Naive thymus-derived CD4-positive, alpha-beta T cell (primary cell): ENCODE measurements at regions of chr12 and their contacts with region 1.

Region 1: DNA sequence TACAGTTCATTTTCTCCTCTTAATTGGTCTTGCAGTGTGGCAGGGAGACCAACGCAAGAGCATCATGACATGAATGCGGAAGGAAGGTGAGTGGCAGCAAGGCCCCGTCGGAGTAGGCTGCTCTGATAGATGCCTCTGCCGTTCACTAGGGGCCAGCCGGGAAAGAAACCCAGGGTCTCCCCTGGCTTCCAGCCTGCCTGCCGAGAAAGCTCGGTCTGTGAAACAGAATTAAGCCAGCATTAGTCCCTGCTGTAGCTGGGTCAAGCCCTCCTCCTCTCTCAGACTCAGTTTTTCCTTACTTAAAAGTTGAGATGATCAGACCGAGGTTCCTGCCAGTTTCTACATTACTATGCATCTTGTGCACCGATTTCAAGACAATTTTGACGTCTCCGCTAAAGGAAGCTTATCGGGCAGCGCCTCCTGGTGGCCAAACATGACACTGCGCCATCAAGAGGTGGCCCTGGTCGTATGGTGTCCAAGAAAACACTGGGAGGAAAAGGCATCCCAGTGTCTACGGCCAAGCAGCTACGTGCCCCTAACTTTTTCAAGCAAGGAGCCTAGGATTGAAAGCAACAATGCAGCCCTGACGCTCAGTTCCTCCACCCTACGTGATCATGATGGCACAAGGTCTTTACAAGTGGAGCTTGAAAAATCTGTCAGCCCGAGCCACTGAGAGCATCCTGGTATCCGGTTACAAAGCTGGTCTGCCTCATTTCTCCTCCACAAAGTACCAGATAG is 131.6 kb downstream of the KSR2 start:
- DNase-seq: peak; percentile 17 to 74 (median 61)
- ATAC-seq: peak; percentile 77
- H3K4me3 ChIP-seq: no peak overlapping the region
- H3K4me3 Mint-ChIP-seq: peak overlapping the region in 8 of 10 donors; percentile 16 to 77 (median 56)
- H3K27ac ChIP-seq: no peak overlapping the region
- H3K27ac Mint-ChIP-seq: no peak overlapping the region
- H3K4me1 ChIP-seq: peaks cover 0 to 4% of the 10 kb centered on the region in 2 donors
- H3K4me1 Mint-ChIP-seq: peaks cover 0 to 8% (median 7%) of the 10 kb centered on the region in 7 donors
- H3K27me3 ChIP-seq: no peaks in the 10 kb centered on the region
- H3K27me3 Mint-ChIP-seq: peaks cover 5 to 35% (median 17%) of the 10 kb centered on the region in 5 donors

Region 2: DNA sequence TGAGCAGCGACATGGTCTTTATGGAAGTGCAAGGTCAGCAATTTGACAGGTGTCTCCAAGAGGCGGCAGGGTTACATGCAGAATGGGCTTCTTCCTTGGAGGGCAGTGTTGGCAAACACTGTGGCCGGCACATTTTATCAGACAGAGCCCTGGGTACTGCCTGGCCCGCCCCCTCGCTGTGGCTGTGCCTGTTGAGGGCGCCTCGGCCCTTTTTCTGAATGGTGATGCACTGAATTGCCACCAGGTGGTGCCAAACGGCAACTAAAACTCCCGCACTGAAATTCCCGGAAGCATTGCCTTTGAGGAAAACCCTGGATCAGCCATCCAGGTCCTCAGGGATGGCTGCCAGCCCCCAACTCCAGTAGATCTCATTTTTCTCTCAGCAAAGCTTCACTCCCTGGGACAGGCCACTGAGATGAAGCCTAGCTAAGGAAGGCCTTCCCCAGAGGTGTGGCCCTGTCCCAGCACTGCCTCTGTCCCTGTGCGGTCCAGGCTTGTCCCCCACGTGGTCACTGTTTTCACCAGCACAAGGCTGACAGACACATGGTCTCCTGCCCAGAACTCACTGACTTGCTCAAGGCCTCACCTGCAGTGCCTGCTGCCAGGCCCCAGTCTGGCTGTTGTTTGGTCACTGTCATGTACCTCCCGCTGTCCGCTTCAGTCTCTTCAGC is 811.6 kb before region 1 on chr12:
- CTCF ChIA-PET with region 1: no interaction called
- POLR2A ChIA-PET with region 1: no interaction called
- intact Hi-C with region 1: loop called in 1 of 2 experiments (anchors 10 kb)
- DNase-seq: peak in 7 of 9 donors; percentile 21 to 54 (median 36)
- ATAC-seq: peak; percentile 84
- H3K4me3 ChIP-seq: no peak overlapping the region
- H3K4me3 Mint-ChIP-seq: no peak overlapping the region
- H3K27ac ChIP-seq: no peak overlapping the region
- H3K27ac Mint-ChIP-seq: peak overlapping the region in 3 of 9 donors; percentile 62 to 69 (median 68)
- H3K4me1 ChIP-seq: no peaks in the 10 kb centered on the region
- H3K4me1 Mint-ChIP-seq: peaks cover 0 to 5% (median 4%) of the 10 kb centered on the region in 7 donors
- H3K27me3 ChIP-seq: no peaks in the 10 kb centered on the region
- H3K27me3 Mint-ChIP-seq: no peaks in the 10 kb centered on the region

Region 3: DNA sequence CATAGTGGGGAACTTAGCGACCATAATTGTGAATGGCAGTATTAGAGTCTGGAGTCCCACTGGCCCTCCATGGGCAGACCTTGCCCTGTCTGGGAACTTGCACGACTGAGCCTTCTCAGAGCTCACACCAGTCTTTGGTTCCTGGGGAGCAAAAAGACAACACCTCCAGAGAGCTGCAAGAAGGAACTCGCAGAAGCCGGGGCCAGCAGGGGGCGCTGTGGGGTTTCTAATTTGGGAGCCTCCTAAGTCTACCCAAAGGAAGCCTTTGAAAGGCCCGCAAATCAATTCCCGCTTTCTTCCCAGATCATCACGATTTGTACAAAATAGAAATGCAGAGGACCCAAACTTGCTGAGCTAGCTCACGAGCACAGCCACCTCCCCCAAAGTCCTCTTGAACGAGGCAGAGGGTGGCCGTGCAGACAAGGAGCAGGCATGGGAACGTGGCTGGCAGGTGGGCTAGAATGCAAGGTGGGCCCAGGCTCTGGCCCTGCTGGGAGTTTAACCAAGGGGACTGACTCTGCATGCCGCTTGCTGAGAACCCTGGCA is 600.6 kb before region 1 on chr12:
- CTCF ChIA-PET with region 1: interaction called, 4 read pairs
- POLR2A ChIA-PET with region 1: no interaction called
- intact Hi-C with region 1: loop called in 1 of 2 experiments (anchors 1 kb)
- DNase-seq: peak in 8 of 9 donors; percentile 31 to 82 (median 42)
- ATAC-seq: no peak
- H3K4me3 ChIP-seq: no peak overlapping the region
- H3K4me3 Mint-ChIP-seq: peak overlapping the region in 1 of 10 donors; percentile 54
- H3K27ac ChIP-seq: no peak overlapping the region
- H3K27ac Mint-ChIP-seq: no peak overlapping the region
- H3K4me1 ChIP-seq: no peaks in the 10 kb centered on the region
- H3K4me1 Mint-ChIP-seq: no peaks in the 10 kb centered on the region
- H3K27me3 ChIP-seq: no peaks in the 10 kb centered on the region
- H3K27me3 Mint-ChIP-seq: peaks cover 1 to 28% (median 22%) of the 10 kb centered on the region in 5 donors

Region 4: DNA sequence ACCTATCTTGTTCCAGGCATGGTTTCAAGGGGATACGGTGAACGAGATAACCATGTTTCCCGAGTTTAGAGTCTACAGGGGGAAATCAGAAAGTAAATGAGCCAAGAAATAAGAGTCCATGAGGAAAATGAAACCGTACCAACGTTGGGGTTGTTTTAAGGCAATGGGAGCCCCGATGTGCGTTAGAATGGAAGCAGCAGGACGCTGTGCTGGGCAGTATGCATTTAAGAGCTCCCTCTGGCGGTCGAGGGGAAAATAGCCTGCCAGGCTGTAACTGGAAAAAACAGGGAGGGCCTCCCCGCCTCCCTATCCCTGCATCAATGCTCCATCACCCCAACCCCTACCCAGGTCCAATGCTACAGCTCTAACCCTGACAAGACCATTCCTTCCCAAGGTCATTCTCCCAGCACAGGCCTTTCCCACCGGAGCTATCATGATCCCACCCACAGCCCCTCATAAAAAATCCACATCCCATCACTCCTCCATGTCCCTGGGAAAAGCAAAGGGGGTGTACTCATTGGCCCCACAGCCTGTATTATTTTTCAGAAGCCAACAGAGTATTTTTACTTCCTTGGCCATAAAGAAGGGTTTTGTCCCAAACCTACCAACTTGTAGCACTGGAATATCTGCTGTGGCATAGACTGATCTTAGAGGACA is 249.4 kb before region 1 on chr12:
- CTCF ChIA-PET with region 1: no interaction called
- POLR2A ChIA-PET with region 1: no interaction called
- intact Hi-C with region 1: loop called in 1 of 2 experiments (anchors 10 kb)
- DNase-seq: peak in 3 of 9 donors; percentile 3 to 53 (median 5)
- ATAC-seq: peak; percentile 46
- H3K4me3 ChIP-seq: no peak overlapping the region
- H3K4me3 Mint-ChIP-seq: no peak overlapping the region
- H3K27ac ChIP-seq: no peak overlapping the region
- H3K27ac Mint-ChIP-seq: no peak overlapping the region
- H3K4me1 ChIP-seq: no peaks in the 10 kb centered on the region
- H3K4me1 Mint-ChIP-seq: no peaks in the 10 kb centered on the region
- H3K27me3 ChIP-seq: no peaks in the 10 kb centered on the region
- H3K27me3 Mint-ChIP-seq: peaks cover 5 to 32% (median 13%) of the 10 kb centered on the region in 5 donors

Region 5: GRCh38 chr12:117803001-117803400 is 34.2 kb before region 1 on chr12:
- CTCF ChIA-PET with region 1: no interaction called
- POLR2A ChIA-PET with region 1: no interaction called
- intact Hi-C with region 1: no loop called
- DNase-seq: no peak
- ATAC-seq: no peak
- H3K4me3 ChIP-seq: no peak overlapping the region
- H3K4me3 Mint-ChIP-seq: no peak overlapping the region
- H3K27ac ChIP-seq: no peak overlapping the region
- H3K27ac Mint-ChIP-seq: no peak overlapping the region
- H3K4me1 ChIP-seq: no peaks in the 10 kb centered on the region
- H3K4me1 Mint-ChIP-seq: no peaks in the 10 kb centered on the region
- H3K27me3 ChIP-seq: no peaks in the 10 kb centered on the region
- H3K27me3 Mint-ChIP-seq: peaks cover 0 to 17% (median 6%) of the 10 kb centered on the region in 5 donors

Region 6: DNA sequence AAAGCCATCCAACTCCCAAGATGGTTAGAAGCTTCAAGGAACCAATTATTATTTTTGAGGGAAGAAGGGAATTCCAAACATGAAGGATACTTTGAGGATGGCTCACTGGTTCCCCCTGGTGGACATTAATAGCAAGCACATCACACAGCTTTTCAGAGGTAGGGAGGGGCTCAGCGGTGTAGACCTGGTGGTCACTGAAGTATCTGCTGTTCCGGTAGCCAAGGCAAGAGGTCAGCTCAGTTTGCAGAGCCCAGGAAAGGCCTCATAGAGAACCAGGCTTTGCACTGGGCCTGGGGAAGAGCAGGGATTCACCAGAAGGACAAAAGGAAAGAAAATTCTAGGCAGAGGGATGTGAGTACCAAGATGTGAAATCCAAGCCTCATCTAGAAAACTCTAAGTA is 12.9 kb after region 1 on chr12:
- CTCF ChIA-PET with region 1: interaction called, 13 read pairs
- POLR2A ChIA-PET with region 1: no interaction called
- intact Hi-C with region 1: no loop called
- DNase-seq: no peak
- ATAC-seq: peak; percentile 42
- H3K4me3 ChIP-seq: no peak overlapping the region
- H3K4me3 Mint-ChIP-seq: no peak overlapping the region
- H3K27ac ChIP-seq: no peak overlapping the region
- H3K27ac Mint-ChIP-seq: no peak overlapping the region
- H3K4me1 ChIP-seq: no peaks in the 10 kb centered on the region
- H3K4me1 Mint-ChIP-seq: peaks cover 0 to 4% (median 0%) of the 10 kb centered on the region in 7 donors
- H3K27me3 ChIP-seq: no peaks in the 10 kb centered on the region
- H3K27me3 Mint-ChIP-seq: peaks cover 3 to 40% (median 32%) of the 10 kb centered on the region in 5 donors

Region 7: GRCh38 chr12:118271790-118272417 is 434.7 kb after region 1 on chr12:
- CTCF ChIA-PET with region 1: no interaction called
- POLR2A ChIA-PET with region 1: no interaction called
- intact Hi-C with region 1: no loop called
- DNase-seq: no peak
- ATAC-seq: no peak
- H3K4me3 ChIP-seq: no peak overlapping the region
- H3K4me3 Mint-ChIP-seq: no peak overlapping the region
- H3K27ac ChIP-seq: no peak overlapping the region
- H3K27ac Mint-ChIP-seq: peak overlapping the region in 2 of 9 donors; percentile 5 to 12
- H3K4me1 ChIP-seq: no peaks in the 10 kb centered on the region
- H3K4me1 Mint-ChIP-seq: peaks cover 10 to 40% (median 26%) of the 10 kb centered on the region in 7 donors
- H3K27me3 ChIP-seq: no peaks in the 10 kb centered on the region
- H3K27me3 Mint-ChIP-seq: no peaks in the 10 kb centered on the region